Tibial artery (tissue), 4 donors: ENCODE measurements at regions of chr17 and their contacts with region 1.

Region 1: DNA sequence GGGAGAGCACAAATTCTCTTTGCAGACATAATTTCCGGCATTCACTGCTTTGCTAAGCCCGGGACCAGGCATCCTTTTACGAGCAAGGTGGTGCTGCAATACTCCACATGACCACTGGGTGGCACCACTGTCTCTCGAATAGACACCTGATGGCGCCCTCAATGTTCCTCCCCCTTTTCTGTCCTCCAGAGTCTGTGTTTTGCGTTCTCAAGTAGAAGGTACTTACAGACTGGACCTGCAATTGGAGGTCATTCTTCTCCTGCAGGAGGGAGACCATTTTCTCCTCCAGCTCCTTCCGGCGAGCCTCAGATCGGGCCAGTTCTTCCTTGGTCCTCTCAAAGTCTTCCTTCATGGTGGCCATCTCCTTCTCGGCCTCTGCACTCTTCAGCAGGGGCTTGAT is 45.2 kb downstream of the MYH13 start:
- DNase-seq: peak; percentile 79 to 85
- H3K4me3 ChIP-seq: no peak overlapping the region
- H3K27ac ChIP-seq: no peak overlapping the region
- H3K4me1 ChIP-seq: no peaks in the 10 kb centered on the region
- H3K27me3 ChIP-seq: peaks cover 0 to 5% of the 10 kb centered on the region in 2 donors
- CTCF ChIP-seq: peak; percentile 70 to 81

Region 2: DNA sequence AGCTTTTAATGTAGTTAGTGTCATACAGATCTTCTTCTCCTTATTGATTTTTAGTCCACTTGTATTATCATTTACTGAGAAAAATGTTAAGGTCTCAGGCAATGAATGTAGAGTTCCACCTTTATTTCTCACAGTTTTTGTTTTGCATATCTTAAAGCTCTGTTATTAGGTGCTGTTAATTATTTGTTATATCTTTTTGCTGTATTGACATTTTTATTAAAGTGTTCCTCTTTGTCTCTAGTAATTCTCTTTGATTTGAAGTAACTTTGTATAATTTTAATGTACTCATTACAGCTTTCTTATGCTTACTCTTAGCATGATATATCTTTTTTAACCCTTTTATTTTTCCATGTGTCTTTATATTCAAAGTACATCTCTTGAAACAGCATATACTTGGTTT is 704.7 kb before region 1 on chr17:
- intact Hi-C with region 1: no loop called
- DNase-seq: no peak
- H3K4me3 ChIP-seq: no peak overlapping the region
- H3K27ac ChIP-seq: no peak overlapping the region
- H3K4me1 ChIP-seq: no peaks in the 10 kb centered on the region
- H3K27me3 ChIP-seq: no peaks in the 10 kb centered on the region
- CTCF ChIP-seq: no peak

Region 3: GRCh38 chr17:10614536-10615155 is 287.0 kb after region 1 on chr17:
- intact Hi-C with region 1: loop called (anchors 5 kb)
- DNase-seq: peak in 1 of 2 donors; percentile 45
- H3K4me3 ChIP-seq: no peak overlapping the region
- H3K27ac ChIP-seq: no peak overlapping the region
- H3K4me1 ChIP-seq: peaks cover 0 to 15% (median 11%) of the 10 kb centered on the region in 4 donors
- H3K27me3 ChIP-seq: no peaks in the 10 kb centered on the region
- CTCF ChIP-seq: peak; percentile 48 to 69